ENCODE measurements at regions of chr10 and their contacts with region 1.

Region 1: GRCh38 chr10:51063659-51064535 is 10.4 kb upstream of the PRKG1 start:
- DNase-seq: no peak
- H3K4me3 ChIP-seq: no peak overlapping the region
- H3K27ac ChIP-seq: no peak overlapping the region
- H3K4me1 ChIP-seq: peaks cover 16% of the 10 kb centered on the region
- H3K27me3 ChIP-seq: no peaks in the 10 kb centered on the region
- CTCF ChIP-seq: peak; percentile 74

Region 2: DNA sequence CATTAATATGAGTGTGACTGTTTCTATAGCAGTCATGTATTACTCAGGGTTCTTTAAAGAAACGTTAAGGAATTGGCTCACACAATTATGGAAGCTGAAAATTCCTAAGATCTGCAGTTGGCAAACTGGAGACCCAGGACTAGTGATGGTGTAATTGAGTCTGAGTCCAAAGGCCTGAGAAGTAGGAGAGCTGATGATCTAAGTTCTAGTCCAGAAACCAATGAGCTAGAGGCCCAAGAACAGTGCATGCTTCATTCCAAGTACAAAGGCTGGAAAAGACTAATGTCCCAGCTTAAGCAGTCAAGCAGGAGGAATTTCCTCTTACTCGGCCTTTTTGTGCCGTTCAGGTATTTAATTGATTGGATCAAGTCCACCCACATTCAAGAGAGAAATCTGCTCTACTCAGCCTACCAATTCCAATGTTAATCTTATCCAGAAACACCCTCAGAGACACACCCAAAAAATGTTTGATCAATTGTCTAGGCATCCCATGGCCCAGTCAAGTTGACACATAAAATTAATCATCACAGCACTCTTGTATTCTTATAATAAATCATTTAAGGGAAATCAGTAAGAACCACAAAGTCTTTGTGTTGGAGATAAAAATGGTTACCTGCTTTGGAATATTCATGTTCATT is 322.5 kb after region 1 on chr10:
- intact Hi-C with region 1: no loop called
- DNase-seq: no peak
- H3K4me3 ChIP-seq: no peak overlapping the region
- H3K27ac ChIP-seq: no peak overlapping the region
- H3K4me1 ChIP-seq: peaks cover 24% of the 10 kb centered on the region
- H3K27me3 ChIP-seq: no peaks in the 10 kb centered on the region
- CTCF ChIP-seq: no peak

Region 3: GRCh38 chr10:51422311-51423120 is 358.6 kb after region 1 on chr10:
- intact Hi-C with region 1: loop called (anchors 10 kb)
- DNase-seq: peak; percentile 31
- H3K4me3 ChIP-seq: no peak overlapping the region
- H3K27ac ChIP-seq: peak overlapping the region; percentile 73
- H3K4me1 ChIP-seq: peaks cover 61% of the 10 kb centered on the region
- H3K27me3 ChIP-seq: no peaks in the 10 kb centered on the region
- CTCF ChIP-seq: peak; percentile 70

Region 4: DNA sequence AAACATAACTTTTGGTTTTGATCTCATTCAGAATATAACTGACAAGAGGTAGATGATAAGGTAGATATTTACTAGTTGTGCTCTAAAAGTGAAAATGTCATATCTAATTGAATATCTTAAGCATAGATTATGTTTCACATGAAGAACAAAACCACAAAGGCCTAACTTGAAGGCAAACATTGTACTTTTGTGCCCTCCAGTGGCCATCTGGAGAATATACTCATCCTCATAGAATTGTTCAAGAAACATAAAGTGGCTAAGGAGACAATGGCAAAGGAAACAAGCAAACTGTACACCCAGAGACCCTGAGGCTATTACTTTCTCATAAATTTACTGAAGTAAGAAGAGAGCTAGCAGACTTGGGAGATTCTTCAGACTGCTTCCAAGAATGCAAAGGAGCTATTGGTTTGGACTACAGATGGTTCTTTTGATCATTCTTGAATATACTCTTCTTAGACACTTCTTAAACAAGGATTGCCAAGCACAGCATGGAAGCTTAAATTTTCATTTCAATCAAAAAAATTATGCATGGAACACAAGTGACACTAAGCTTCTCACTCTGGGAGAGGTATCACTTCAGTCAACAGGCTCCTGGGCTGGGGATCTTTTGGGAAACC is 1152.0 kb after region 1 on chr10:
- intact Hi-C with region 1: loop called (anchors 10 kb)
- DNase-seq: no peak
- H3K4me3 ChIP-seq: no peak overlapping the region
- H3K27ac ChIP-seq: no peak overlapping the region
- H3K4me1 ChIP-seq: no peaks in the 10 kb centered on the region
- H3K27me3 ChIP-seq: no peaks in the 10 kb centered on the region
- CTCF ChIP-seq: peak; percentile 81